HEK293T (cell line): ENCODE measurements at regions of chr21 and their contacts with region 1.

Region 1: GRCh38 chr21:31558962-31559367 is 100.5 kb upstream of the SOD1 start:
- DNase-seq: peak; percentile 96

Region 2: GRCh38 chr21:31354604-31355443 is 204.1 kb before region 1 on chr21:
- CTCF ChIA-PET with region 1: no interaction called
- POLR2A ChIA-PET with region 1: no interaction called
- DNase-seq: no peak

Region 3: GRCh38 chr21:31524140-31524539 is 34.8 kb before region 1 on chr21:
- CTCF ChIA-PET with region 1: no interaction called
- POLR2A ChIA-PET with region 1: interaction called, 18 read pairs
- DNase-seq: no peak

Region 4: GRCh38 chr21:31537872-31538576 is 20.9 kb before region 1 on chr21:
- CTCF ChIA-PET with region 1: no interaction called
- POLR2A ChIA-PET with region 1: interaction called, 26 read pairs
- DNase-seq: no peak

Region 5: GRCh38 chr21:31548688-31549087 is 10.3 kb before region 1 on chr21:
- CTCF ChIA-PET with region 1: interaction called, 6 read pairs
- POLR2A ChIA-PET with region 1: interaction called, 45 read pairs
- DNase-seq: no peak

Region 6: GRCh38 chr21:31580866-31581276 is 21.9 kb after region 1 on chr21:
- CTCF ChIA-PET with region 1: interaction called, 7 read pairs
- POLR2A ChIA-PET with region 1: interaction called, 15 read pairs
- DNase-seq: peak; percentile 80

Region 7: DNA sequence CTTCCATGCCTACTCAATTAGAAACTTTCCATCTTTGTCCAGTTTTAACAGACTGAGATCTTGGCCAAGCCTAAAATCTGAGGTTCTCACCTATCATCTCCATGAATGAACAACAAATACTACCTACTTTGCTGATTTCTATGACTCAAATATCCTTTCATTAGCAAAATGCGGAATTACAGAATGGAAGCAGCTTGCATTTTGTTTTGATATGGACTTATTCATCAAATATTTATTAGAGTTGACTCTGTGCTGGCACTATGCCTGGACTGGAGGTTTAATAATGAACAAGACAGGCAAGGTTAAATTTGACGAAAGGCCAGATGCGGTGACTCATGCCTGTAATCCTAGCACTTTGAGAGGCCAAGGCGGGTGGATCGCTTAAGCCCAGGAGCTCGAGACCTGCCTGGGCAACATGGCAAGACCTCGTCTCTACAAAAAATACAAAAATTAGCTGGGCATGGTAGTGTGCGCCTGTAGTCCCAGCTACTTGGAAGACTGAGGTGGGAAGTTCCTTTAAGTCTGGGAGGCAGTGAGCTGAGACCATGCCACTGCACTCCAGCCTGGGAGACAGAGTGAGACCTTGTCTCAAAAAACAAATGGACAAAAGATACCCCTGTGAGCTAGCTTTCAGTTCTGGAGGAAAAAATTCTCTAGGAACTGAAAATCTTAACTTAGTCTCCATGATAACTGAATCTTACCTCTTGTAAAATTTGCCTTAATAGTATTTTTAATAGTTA is 71.2 kb after region 1 on chr21:
- CTCF ChIA-PET with region 1: no interaction called
- POLR2A ChIA-PET with region 1: no interaction called
- DNase-seq: no peak